Caco-2 (cell line): ENCODE measurements at regions of chr5 and their contacts with region 1.

Region 1: DNA sequence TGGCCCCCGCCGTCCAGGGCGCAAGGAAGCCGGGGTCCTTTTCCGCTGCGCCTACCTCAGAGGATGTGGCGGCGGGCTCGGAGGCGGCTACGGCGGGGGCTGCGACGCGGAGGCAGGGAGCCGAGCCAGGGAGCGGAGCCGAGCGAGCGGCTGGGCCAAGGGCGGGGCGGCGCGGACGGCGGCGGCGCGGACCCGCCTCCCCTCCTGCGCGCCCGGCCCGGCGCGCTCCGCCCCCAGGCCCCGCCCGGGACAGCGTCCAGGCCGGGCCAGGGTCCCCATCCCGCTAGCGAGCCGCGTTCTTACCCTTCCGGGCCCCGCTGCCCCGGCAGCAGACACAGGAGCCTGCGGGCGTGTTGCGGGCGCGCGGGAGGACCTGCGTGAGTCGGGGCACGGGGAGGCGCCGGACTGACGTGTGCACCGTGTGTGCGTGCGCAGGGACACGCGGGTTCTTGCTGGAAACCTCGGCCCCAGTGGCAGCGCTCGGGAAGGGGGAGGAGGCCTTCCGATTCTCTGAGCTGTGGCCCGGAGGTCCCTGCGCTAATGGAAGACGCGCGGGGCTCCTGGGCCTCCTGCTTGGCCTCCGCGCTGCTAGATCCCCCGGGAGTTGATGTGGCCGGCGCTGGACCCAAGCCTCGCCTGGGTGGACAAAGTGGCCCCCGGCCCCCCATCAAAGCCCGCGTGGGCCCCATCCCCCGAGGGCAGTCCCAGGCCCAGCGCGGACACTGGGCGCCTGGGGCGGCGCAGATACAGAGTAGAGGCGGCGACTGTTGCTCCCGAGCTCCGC is at the start of gene VDAC1:
- DNase-seq: peak; percentile 80 to 88
- H3K4me3 ChIP-seq: peak within 1 kb of the TSS; percentile 91
- H3K4me3 Mint-ChIP-seq: peak within 1 kb of the TSS; percentile 81
- H3K27ac Mint-ChIP-seq: peak within 1 kb of the TSS; percentile 89
- H3K4me1 ChIP-seq: peaks cover 36% of the 10 kb centered on the region
- H3K4me1 Mint-ChIP-seq: peaks cover 7% of the 10 kb centered on the region
- H3K27me3 ChIP-seq: no peaks in the 10 kb centered on the region
- H3K27me3 Mint-ChIP-seq: no peaks in the 10 kb centered on the region
- CTCF ChIP-seq: no peak
- total RNA-seq, gene VDAC1: 317 and 358 TPM in 2 replicates

Region 2: GRCh38 chr5:133968049-133968980 is 36.5 kb before region 1 on chr5 and contains the start of gene C5orf15:
- CTCF ChIA-PET with region 1: no interaction called
- POLR2A ChIA-PET with region 1: no interaction called
- intact Hi-C with region 1: loop called (anchors 2 kb)
- DNase-seq: peak; percentile 93 to 96
- H3K4me3 ChIP-seq: peak within 1 kb of the TSS; percentile 78
- H3K4me3 Mint-ChIP-seq: peak within 1 kb of the TSS; percentile 91
- H3K27ac Mint-ChIP-seq: peak within 1 kb of the TSS; percentile 97
- H3K4me1 ChIP-seq: peaks cover 17% of the 10 kb centered on the region
- H3K4me1 Mint-ChIP-seq: peaks cover 26% of the 10 kb centered on the region
- H3K27me3 ChIP-seq: no peaks in the 10 kb centered on the region
- H3K27me3 Mint-ChIP-seq: no peaks in the 10 kb centered on the region
- CTCF ChIP-seq: no peak
- total RNA-seq, gene C5orf15: 35.6 and 41.4 TPM in 2 replicates

Region 3: DNA sequence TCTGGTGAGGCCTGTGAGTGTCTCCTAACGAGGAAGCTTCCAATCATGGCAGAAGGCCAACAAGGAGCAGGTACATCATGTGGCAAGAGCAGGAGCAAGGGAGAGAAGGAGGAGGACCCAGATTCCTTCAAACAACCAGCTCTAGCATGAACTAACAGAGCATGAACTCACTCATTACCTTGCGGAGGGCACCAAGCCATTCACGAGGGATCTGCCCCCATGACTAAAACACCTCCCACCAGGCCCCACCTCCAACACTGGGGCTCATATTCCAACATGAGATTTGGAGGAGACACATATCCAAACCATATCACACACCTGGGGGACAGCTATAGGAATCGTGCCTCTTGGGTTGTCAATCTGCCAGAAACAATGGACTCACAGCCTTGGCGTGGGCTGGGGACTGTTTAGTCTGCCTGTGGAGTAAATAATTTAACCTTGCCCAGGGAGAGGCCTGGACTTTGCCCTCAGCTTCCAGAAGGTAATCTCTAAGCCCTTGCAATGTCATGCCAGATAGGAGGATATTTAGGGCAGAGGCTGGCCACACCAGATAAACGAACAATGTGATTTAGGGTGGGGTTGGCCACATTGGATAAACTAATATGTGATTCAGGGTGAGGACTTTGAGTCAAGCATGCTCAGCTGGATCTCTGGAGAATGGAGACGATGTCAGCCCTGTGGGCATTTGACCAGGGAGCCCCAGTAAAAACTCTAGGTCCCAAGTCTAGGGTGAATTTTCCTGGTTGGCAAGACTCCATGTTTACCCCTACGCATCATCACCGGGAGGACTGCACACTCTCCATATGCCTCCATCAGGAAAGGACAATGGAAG is 13.6 kb after region 1 on chr5:
- CTCF ChIA-PET with region 1: interaction called, 3 read pairs
- POLR2A ChIA-PET with region 1: interaction called, 14 read pairs
- intact Hi-C with region 1: loop called (anchors 1 kb)
- DNase-seq: peak; percentile 76 to 89
- H3K4me3 ChIP-seq: no peak overlapping the region
- H3K4me3 Mint-ChIP-seq: peak overlapping the region; percentile 32
- H3K27ac Mint-ChIP-seq: peak overlapping the region; percentile 94
- H3K4me1 ChIP-seq: peaks cover 38% of the 10 kb centered on the region
- H3K4me1 Mint-ChIP-seq: peaks cover 35% of the 10 kb centered on the region
- H3K27me3 ChIP-seq: no peaks in the 10 kb centered on the region
- H3K27me3 Mint-ChIP-seq: no peaks in the 10 kb centered on the region
- CTCF ChIP-seq: no peak

Region 4: GRCh38 chr5:134026521-134027268 is 21.9 kb after region 1 on chr5:
- CTCF ChIA-PET with region 1: interaction called, 11 read pairs
- POLR2A ChIA-PET with region 1: interaction called, 4 read pairs
- intact Hi-C with region 1: no loop called
- DNase-seq: peak; percentile 78 to 84
- H3K4me3 ChIP-seq: no peak overlapping the region
- H3K4me3 Mint-ChIP-seq: no peak overlapping the region
- H3K27ac Mint-ChIP-seq: no peak overlapping the region
- H3K4me1 ChIP-seq: peaks cover 7% of the 10 kb centered on the region; the same call in 1 of the 2 replicates
- H3K4me1 Mint-ChIP-seq: peaks cover 6% of the 10 kb centered on the region
- H3K27me3 ChIP-seq: no peaks in the 10 kb centered on the region
- H3K27me3 Mint-ChIP-seq: no peaks in the 10 kb centered on the region
- CTCF ChIP-seq: peak; percentile 56 to 84

Region 5: DNA sequence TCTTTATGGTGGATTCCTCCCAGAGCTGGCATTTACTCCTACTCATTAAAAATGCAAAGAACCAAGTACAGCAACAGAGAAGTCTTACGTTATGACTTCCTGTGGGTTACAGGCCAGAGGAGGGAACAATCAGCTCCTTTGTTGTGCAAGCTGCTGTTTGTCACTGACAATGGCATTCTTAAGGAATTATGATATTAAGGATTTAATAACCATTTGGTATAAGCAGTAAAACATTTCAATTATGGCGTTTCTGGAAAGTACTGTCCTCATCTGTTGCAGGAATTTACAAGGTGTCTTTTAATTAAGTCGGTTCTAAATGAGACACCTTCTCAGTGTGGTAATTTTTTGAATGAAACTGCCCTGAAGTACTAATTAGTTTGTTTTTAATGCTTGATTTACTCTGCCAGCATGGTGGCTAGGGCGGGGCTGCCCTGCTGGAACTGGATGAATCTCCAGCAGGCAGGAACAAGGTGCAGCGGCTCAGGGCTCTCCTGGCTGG is 49.1 kb after region 1 on chr5:
- CTCF ChIA-PET with region 1: no interaction called
- POLR2A ChIA-PET with region 1: no interaction called
- intact Hi-C with region 1: no loop called
- DNase-seq: no peak
- H3K4me3 ChIP-seq: no peak overlapping the region
- H3K4me3 Mint-ChIP-seq: no peak overlapping the region
- H3K27ac Mint-ChIP-seq: no peak overlapping the region
- H3K4me1 ChIP-seq: no peaks in the 10 kb centered on the region
- H3K4me1 Mint-ChIP-seq: no peaks in the 10 kb centered on the region
- H3K27me3 ChIP-seq: no peaks in the 10 kb centered on the region
- H3K27me3 Mint-ChIP-seq: no peaks in the 10 kb centered on the region
- CTCF ChIP-seq: no peak